Cardiac septum (tissue), 1 donor: ENCODE measurements at regions of chr3 and their contacts with region 1.

Region 1: GRCh38 chr3:97821810-97822775 is at the start of gene CRYBG3:
- DNase-seq: peak; percentile 93
- total RNA-seq, gene CRYBG3: 38.2 TPM

Region 2: DNA sequence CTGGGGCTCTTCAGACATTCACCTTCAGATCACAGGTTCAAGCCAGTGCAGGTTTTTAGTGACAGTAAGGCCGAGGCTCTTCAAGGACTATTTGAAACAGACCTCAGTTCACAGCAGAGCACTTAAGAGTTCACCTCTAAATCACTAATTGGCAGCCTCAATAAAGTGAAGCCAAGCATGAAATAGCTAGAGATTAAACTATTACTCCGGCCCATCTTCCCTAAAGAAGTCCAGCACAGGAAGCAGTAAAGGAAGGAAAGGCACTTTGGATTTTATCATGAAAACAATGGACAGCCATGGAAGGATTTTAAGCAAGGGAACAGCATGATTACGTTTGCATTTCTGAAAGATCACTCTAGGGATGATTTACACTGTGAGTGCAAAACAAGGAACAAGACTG is 85.2 kb before region 1 on chr3:
- intact Hi-C with region 1: no loop called
- DNase-seq: no peak

Region 3: GRCh38 chr3:97863031-97863430 is 40.9 kb after region 1 on chr3:
- intact Hi-C with region 1: loop called (anchors 2 kb)
- DNase-seq: no peak